K562 (cell line): ENCODE measurements at regions of chr18 and their contacts with region 1.

Region 1: GRCh38 chr18:14086458-14087231 is 45.6 kb downstream of the ZNF519 start:
- DNase-seq: peak; percentile 17 to 51 (median 28)
- ATAC-seq: peak; percentile 89
- H3K4me3 ChIP-seq: no peak overlapping the region
- H3K27ac ChIP-seq: no peak overlapping the region
- H3K4me1 ChIP-seq: no peaks in the 10 kb centered on the region
- H3K27me3 ChIP-seq: no peaks in the 10 kb centered on the region; a peak in 1 of 5 replicates
- CTCF ChIP-seq: peak; percentile 67 to 85 (median 74)
- EP300 ChIP-seq: no peak
- POLR2A ChIP-seq: no peak
- RAD21 ChIP-seq: peak; percentile 54 to 81

Region 2: DNA sequence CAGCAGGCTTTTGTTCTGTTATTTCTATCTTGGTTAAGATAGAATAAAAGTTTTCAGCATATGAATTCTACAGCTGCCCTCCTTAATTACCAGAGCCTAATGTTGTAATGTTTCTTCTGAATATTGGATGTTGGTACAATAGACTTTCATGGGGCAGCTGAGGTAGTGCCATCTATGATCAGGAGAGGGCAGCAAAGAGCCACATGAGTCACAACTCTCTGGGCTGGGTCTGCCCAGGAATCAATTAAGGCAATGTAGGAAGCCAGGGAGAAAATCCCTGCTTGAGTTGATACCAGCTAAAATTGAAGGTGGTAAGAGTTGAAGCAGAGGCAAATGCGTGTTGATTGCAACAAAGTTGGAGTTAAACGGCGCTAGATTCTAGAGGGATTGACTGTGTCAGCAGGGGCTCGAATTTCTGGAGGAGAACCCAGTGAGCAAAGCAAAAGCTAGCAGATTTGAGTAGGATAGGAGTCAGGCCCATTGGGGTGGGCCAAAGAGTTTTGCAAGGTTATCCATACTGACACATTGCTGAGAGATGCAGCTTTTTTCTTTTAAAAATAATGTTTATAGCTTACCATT is 273.3 kb before region 1 on chr18:
- CTCF ChIA-PET with region 1: interaction called, 6 read pairs
- POLR2A ChIA-PET with region 1: no interaction called
- in situ Hi-C with region 1: no loop called
- intact Hi-C with region 1: loop called (anchors 1 kb)
- DNase-seq: peak; percentile 59 to 72 (median 72)
- ATAC-seq: peak; percentile 97
- H3K4me3 ChIP-seq: no peak overlapping the region
- H3K27ac ChIP-seq: no peak overlapping the region
- H3K4me1 ChIP-seq: no peaks in the 10 kb centered on the region
- H3K27me3 ChIP-seq: no peaks in the 10 kb centered on the region; a peak in 1 of 5 replicates
- CTCF ChIP-seq: peak; percentile 67 to 75 (median 74)
- EP300 ChIP-seq: no peak
- POLR2A ChIP-seq: no peak
- RAD21 ChIP-seq: peak; percentile 41 to 67; a peak in 3 of 4 replicates

Region 3: GRCh38 chr18:13831864-13832508 is 254.7 kb before region 1 on chr18:
- CTCF ChIA-PET with region 1: interaction called, 5 read pairs
- POLR2A ChIA-PET with region 1: no interaction called
- in situ Hi-C with region 1: loop called (anchors 10 kb)
- intact Hi-C with region 1: no loop called
- DNase-seq: peak in 2 of 4 experiments; percentile 12 to 18
- ATAC-seq: peak; percentile 76
- H3K4me3 ChIP-seq: no peak overlapping the region
- H3K27ac ChIP-seq: no peak overlapping the region
- H3K4me1 ChIP-seq: peaks cover 0 to 5% of the 10 kb centered on the region in 2 experiments; a peak in 1 of 5 replicates
- H3K27me3 ChIP-seq: no peaks in the 10 kb centered on the region; a peak in 2 of 5 replicates
- CTCF ChIP-seq: peak; percentile 14 to 37 (median 25); a peak in 3 of 6 replicates
- EP300 ChIP-seq: no peak
- POLR2A ChIP-seq: no peak
- RAD21 ChIP-seq: peak in 1 of 2 experiments; percentile 39; a peak in 2 of 4 replicates

Region 4: GRCh38 chr18:13940326-13940725 is 146.3 kb before region 1 on chr18:
- CTCF ChIA-PET with region 1: no interaction called
- POLR2A ChIA-PET with region 1: no interaction called
- in situ Hi-C with region 1: no loop called
- intact Hi-C with region 1: no loop called
- DNase-seq: no peak
- ATAC-seq: no peak
- H3K4me3 ChIP-seq: no peak overlapping the region
- H3K27ac ChIP-seq: no peak overlapping the region
- H3K4me1 ChIP-seq: no peaks in the 10 kb centered on the region
- H3K27me3 ChIP-seq: no peaks in the 10 kb centered on the region; a peak in 1 of 5 replicates
- CTCF ChIP-seq: no peak
- EP300 ChIP-seq: no peak
- POLR2A ChIP-seq: no peak
- RAD21 ChIP-seq: no peak

Region 5: DNA sequence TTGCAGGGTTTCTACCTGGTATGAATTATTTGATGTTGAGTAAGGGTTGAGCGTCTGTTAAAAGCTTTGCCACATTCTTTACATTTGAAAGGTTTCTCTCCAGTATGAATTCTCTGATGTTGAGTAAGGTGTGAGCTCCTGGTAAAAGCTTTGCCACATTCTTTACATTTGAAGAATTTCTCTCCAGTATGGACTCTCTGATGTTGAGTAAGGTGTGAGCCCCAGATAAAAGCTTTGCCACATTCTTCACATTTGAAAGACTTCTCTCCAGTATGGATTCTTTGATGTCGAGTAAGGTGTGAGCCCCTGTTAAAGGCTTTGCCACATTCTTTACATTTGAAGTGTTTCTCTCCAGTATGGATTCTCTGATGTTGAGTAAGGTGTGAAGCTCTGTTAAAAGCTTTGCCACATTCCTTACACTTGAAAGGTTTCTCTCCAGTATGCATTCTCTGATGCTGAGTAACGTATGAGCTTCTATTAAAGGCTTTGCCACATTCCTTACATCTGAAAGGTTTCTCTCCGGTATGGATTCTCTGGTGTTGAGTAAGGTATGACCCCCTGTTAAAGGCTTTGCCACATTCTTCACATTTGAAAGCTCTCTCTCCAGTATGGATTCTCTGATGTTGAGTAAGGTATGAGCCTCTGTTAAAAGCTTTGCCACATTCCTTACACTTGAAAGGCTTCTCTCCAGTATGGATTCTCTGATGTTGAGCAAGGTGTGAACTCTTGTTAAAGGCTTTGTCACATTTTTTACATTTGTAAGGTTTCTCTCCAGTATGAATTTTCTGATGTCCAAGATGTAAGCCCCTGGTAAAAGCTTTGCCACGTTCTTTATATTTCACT is 18.5 kb after region 1 on chr18:
- CTCF ChIA-PET with region 1: no interaction called
- POLR2A ChIA-PET with region 1: no interaction called
- in situ Hi-C with region 1: no loop called
- intact Hi-C with region 1: no loop called
- DNase-seq: no peak
- ATAC-seq: no peak
- H3K4me3 ChIP-seq: no peak overlapping the region
- H3K27ac ChIP-seq: no peak overlapping the region
- H3K4me1 ChIP-seq: no peaks in the 10 kb centered on the region
- H3K27me3 ChIP-seq: no peaks in the 10 kb centered on the region
- CTCF ChIP-seq: no peak
- EP300 ChIP-seq: no peak
- POLR2A ChIP-seq: no peak
- RAD21 ChIP-seq: no peak

Region 6: GRCh38 chr18:14978962-14979535 is 892.4 kb after region 1 on chr18:
- CTCF ChIA-PET with region 1: no interaction called
- POLR2A ChIA-PET with region 1: no interaction called
- in situ Hi-C with region 1: no loop called
- intact Hi-C with region 1: no loop called
- DNase-seq: peak in 3 of 4 experiments; percentile 5 to 19 (median 8)
- ATAC-seq: no peak
- H3K4me3 ChIP-seq: no peak overlapping the region
- H3K27ac ChIP-seq: no peak overlapping the region
- H3K4me1 ChIP-seq: no peaks in the 10 kb centered on the region
- H3K27me3 ChIP-seq: no peaks in the 10 kb centered on the region
- CTCF ChIP-seq: no peak
- EP300 ChIP-seq: no peak
- POLR2A ChIP-seq: no peak
- RAD21 ChIP-seq: no peak